Naive thymus-derived CD4-positive, alpha-beta T cell (primary cell): ENCODE measurements at regions of chr17 and their contacts with region 1.

Region 1: GRCh38 chr17:82418001-82418986 is at the starts of genes HEXD and OGFOD3:
- DNase-seq: peak; percentile 78 to 96 (median 92)
- ATAC-seq: peak; percentile 94
- H3K4me3 ChIP-seq: peak within 1 kb of the TSS; percentile 89
- H3K4me3 Mint-ChIP-seq: peak within 1 kb of the TSS; percentile 78 to 89 (median 84)
- H3K27ac ChIP-seq: peak within 1 kb of the TSS; percentile 94
- H3K27ac Mint-ChIP-seq: peak within 1 kb of the TSS; percentile 80 to 92 (median 86)
- H3K4me1 ChIP-seq: peaks cover 5 to 20% of the 10 kb centered on the region in 2 donors
- H3K4me1 Mint-ChIP-seq: peaks cover 23 to 42% (median 31%) of the 10 kb centered on the region in 7 donors
- H3K27me3 ChIP-seq: no peaks in the 10 kb centered on the region
- H3K27me3 Mint-ChIP-seq: no peaks in the 10 kb centered on the region
- total RNA-seq, gene HEXD: 62.7 to 153 (median 66.9) TPM
- total RNA-seq, gene OGFOD3: 21.9 to 34.6 (median 32.3) TPM

Region 2: DNA sequence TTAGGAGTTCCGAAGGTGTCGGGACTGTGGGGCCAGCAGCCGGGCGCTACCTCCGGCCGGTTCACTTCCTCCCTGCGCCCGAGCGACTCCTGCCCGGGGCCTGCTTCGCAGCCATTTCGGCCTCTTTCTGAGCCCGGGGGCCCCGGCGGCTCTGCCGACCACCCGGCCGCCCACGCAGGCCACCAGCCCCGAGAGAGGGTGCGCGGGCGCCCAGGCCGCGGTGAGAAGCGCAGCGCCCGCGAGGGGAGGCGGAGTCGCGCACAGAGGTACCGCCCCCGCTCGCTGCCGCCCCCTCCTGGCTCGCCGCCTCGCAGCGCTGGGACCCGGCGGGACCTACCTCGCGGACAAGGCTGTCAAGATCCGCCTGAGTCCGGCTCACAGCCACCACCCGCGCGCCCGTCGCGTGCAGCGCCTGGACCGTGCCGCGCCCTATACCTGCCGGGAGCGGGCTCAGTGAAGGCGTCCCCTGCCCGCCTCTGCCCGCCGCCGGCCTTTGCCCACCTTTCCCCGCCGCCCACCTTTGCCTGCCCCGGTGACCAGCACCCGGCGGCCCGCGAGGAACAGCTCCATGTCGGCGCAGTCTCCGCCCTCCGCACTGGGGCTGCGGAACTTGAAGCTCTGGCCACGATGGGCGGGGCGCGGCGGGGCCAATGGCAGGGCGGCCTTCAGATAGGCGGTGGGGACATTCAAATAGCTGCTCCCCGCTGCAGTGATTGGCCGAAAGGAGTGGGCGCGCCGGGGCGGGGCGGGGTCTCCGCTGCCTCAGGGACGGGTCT is 381.0 kb before region 1 on chr17 and contains the start of gene DCXR:
- CTCF ChIA-PET with region 1: no interaction called
- POLR2A ChIA-PET with region 1: no interaction called
- intact Hi-C with region 1: no loop called
- DNase-seq: peak; percentile 87 to 97 (median 93)
- ATAC-seq: peak; percentile 96
- H3K4me3 ChIP-seq: peak within 1 kb of the TSS; percentile 71
- H3K4me3 Mint-ChIP-seq: peak within 1 kb of the TSS; percentile 82 to 94 (median 89)
- H3K27ac ChIP-seq: peak within 1 kb of the TSS; percentile 75
- H3K27ac Mint-ChIP-seq: peak within 1 kb of the TSS; percentile 61 to 94 (median 90)
- H3K4me1 ChIP-seq: peaks cover 7% of the 10 kb centered on the region in 2 donors
- H3K4me1 Mint-ChIP-seq: peaks cover 14 to 29% (median 24%) of the 10 kb centered on the region in 7 donors
- H3K27me3 ChIP-seq: no peaks in the 10 kb centered on the region
- H3K27me3 Mint-ChIP-seq: no peaks in the 10 kb centered on the region
- total RNA-seq, gene DCXR: 63.0 to 130 (median 83.6) TPM

Region 3: GRCh38 chr17:82236142-82236981 is 181.9 kb before region 1 on chr17:
- CTCF ChIA-PET with region 1: no interaction called
- POLR2A ChIA-PET with region 1: no interaction called
- intact Hi-C with region 1: loop called (anchors 1 to 2 kb)
- DNase-seq: peak; percentile 58 to 77 (median 71)
- ATAC-seq: peak; percentile 66
- H3K4me3 ChIP-seq: no peak overlapping the region
- H3K4me3 Mint-ChIP-seq: peak overlapping the region in 1 of 10 donors; percentile 17
- H3K27ac ChIP-seq: peak overlapping the region; percentile 46
- H3K27ac Mint-ChIP-seq: peak overlapping the region in 5 of 9 donors; percentile 23 to 82 (median 51)
- H3K4me1 ChIP-seq: peaks cover 10 to 47% of the 10 kb centered on the region in 2 donors
- H3K4me1 Mint-ChIP-seq: peaks cover 5 to 47% (median 33%) of the 10 kb centered on the region in 7 donors
- H3K27me3 ChIP-seq: no peaks in the 10 kb centered on the region
- H3K27me3 Mint-ChIP-seq: no peaks in the 10 kb centered on the region

Region 4: DNA sequence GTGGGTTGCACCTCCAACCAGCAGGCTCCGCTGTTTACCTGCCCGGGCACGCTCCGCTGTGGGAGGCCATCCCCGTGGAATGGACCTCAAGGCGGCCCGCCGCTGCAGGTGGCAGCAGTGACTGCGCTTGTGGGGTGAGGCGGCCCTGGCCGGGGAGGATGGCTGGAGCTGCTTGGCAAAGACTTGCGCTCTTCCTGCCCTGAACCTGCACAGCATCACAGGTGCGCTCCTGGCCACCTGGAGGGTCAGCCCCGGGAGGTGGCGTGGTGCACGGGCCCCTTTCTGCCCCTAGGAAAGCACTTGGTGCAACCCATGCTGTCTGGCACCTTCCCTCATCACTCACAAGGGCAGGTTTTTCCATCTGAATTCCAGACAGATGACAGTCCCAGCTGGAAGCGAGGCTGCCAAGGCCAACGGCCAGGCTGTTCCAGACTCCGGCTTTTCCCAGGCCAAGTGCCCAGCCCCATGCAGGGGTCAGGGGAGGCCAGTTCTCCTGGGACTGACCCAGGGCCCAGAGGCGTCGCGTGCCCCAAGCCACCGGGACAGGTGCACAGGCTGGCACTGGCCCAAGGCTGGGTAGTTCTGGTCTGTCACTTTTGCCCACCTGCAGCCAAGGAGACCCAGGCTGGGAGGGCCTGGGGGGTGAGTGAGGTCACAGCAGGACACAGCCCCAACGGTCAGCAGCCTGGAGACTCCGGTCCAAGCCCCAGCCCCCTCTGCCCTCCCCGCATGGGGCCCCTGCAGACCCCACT is 33.4 kb before region 1 on chr17:
- CTCF ChIA-PET with region 1: no interaction called
- POLR2A ChIA-PET with region 1: no interaction called
- intact Hi-C with region 1: no loop called
- DNase-seq: no peak
- ATAC-seq: no peak
- H3K4me3 ChIP-seq: no peak overlapping the region
- H3K4me3 Mint-ChIP-seq: no peak overlapping the region
- H3K27ac ChIP-seq: no peak overlapping the region
- H3K27ac Mint-ChIP-seq: no peak overlapping the region
- H3K4me1 ChIP-seq: peaks cover 0 to 5% of the 10 kb centered on the region in 2 donors
- H3K4me1 Mint-ChIP-seq: peaks cover 5 to 12% (median 7%) of the 10 kb centered on the region in 7 donors
- H3K27me3 ChIP-seq: no peaks in the 10 kb centered on the region
- H3K27me3 Mint-ChIP-seq: peaks cover 13 to 18% (median 16%) of the 10 kb centered on the region in 5 donors

Region 5: DNA sequence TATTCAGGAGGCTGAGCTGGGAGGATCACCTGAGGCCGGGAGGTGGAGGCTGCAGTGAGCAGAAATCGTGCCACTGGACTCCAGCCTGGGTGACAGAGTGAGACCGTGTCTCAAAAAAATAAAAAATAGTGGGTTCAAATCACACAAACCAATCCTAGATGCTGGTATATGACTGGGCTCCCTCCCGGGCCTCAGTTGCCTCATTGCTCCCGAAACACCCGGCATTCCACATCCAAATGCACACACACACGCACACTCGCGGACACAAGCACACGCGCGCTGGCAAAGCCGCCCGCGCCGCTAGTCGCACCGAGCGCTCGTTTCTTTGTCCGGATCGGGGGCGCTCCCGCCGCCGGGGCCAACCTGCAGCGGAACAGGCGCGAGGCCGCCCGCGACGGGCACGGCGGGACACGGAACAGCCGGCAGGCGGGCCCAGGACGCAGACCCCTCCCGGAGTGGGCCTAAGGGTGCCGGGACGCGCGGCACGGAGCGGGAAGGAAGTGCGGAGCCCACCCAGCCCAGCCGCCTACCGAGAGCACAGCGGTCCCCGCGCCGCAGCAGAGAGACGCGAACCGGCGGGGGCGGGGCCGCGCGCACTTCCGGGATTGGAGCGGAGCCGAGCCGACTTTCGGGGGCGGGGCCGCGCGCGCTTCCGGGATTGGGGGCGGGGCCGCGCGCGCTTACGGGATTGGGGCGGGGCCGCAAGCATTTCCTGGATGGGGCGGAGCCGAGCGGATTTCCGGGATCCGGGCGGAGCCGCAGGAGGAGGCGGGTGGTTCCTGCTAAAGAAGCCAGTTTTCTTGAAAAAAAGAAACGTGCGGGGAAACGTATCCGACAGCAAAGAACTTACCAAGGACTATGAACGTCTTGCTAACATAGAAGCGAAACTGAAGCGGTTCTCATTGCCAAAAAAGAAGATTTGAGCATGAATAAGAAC is 32.1 kb after region 1 on chr17 and contains the start of gene CYBC1:
- CTCF ChIA-PET with region 1: interaction called, 4 read pairs
- POLR2A ChIA-PET with region 1: interaction called, 19 read pairs
- intact Hi-C with region 1: loop called (anchors 1 kb)
- DNase-seq: peak; percentile 88 to 97 (median 94)
- ATAC-seq: peak; percentile 91
- H3K4me3 ChIP-seq: peak within 1 kb of the TSS; percentile 92
- H3K4me3 Mint-ChIP-seq: peak within 1 kb of the TSS; percentile 93 to 99 (median 98)
- H3K27ac ChIP-seq: peak within 1 kb of the TSS; percentile 86
- H3K27ac Mint-ChIP-seq: peak within 1 kb of the TSS; percentile 92 to 99 (median 97)
- H3K4me1 ChIP-seq: peaks cover 14 to 22% of the 10 kb centered on the region in 2 donors
- H3K4me1 Mint-ChIP-seq: peaks cover 22 to 49% (median 33%) of the 10 kb centered on the region in 7 donors
- H3K27me3 ChIP-seq: no peaks in the 10 kb centered on the region
- H3K27me3 Mint-ChIP-seq: no peaks in the 10 kb centered on the region
- total RNA-seq, gene CYBC1: 112 to 385 (median 199) TPM

Region 6: GRCh38 chr17:82518826-82519810 is 100.8 kb after region 1 on chr17 and contains the start of gene FOXK2:
- CTCF ChIA-PET with region 1: no interaction called
- POLR2A ChIA-PET with region 1: interaction called, 8 read pairs
- intact Hi-C with region 1: loop called in 1 of 2 experiments (anchors 1 kb)
- DNase-seq: peak; percentile 90 to 99 (median 95)
- ATAC-seq: peak; percentile 99
- H3K4me3 ChIP-seq: peak within 1 kb of the TSS; percentile 67
- H3K4me3 Mint-ChIP-seq: peak within 1 kb of the TSS; percentile 82 to 99 (median 93)
- H3K27ac ChIP-seq: peak within 1 kb of the TSS; percentile 92
- H3K27ac Mint-ChIP-seq: peak within 1 kb of the TSS; percentile 71 to 93 (median 87)
- H3K4me1 ChIP-seq: peaks cover 4 to 16% of the 10 kb centered on the region in 2 donors
- H3K4me1 Mint-ChIP-seq: peaks cover 15 to 36% (median 30%) of the 10 kb centered on the region in 7 donors
- H3K27me3 ChIP-seq: no peaks in the 10 kb centered on the region
- H3K27me3 Mint-ChIP-seq: no peaks in the 10 kb centered on the region
- total RNA-seq, gene FOXK2: 36.5 to 67.1 (median 48.4) TPM

Region 7: GRCh38 chr17:82698065-82698973 is 280.0 kb after region 1 on chr17 and contains the start of gene RAB40B:
- CTCF ChIA-PET with region 1: no interaction called
- POLR2A ChIA-PET with region 1: no interaction called
- intact Hi-C with region 1: loop called in 1 of 2 experiments (anchors 1 kb)
- DNase-seq: peak; percentile 94 to 99 (median 99)
- ATAC-seq: peak; percentile 98
- H3K4me3 ChIP-seq: peak within 1 kb of the TSS; percentile 83
- H3K4me3 Mint-ChIP-seq: peak within 1 kb of the TSS; percentile 83 to 96 (median 89)
- H3K27ac ChIP-seq: peak within 1 kb of the TSS; percentile 61
- H3K27ac Mint-ChIP-seq: peak within 1 kb of the TSS in 6 of 9 donors; percentile 33 to 87 (median 76)
- H3K4me1 ChIP-seq: peaks cover 5 to 8% of the 10 kb centered on the region in 2 donors
- H3K4me1 Mint-ChIP-seq: peaks cover 0 to 16% (median 7%) of the 10 kb centered on the region in 7 donors
- H3K27me3 ChIP-seq: no peaks in the 10 kb centered on the region
- H3K27me3 Mint-ChIP-seq: peaks cover 0 to 16% (median 0%) of the 10 kb centered on the region in 5 donors
- total RNA-seq, gene RAB40B: 2.8 to 6.1 (median 3.6) TPM